ENCODE measurements at regions of chr1 and their contacts with region 1.

Region 1: GRCh38 chr1:228165372-228166169 is at the start of gene IBA57:
- DNase-seq: peak; percentile 100
- ATAC-seq: peak; percentile 96
- H3K4me3 ChIP-seq: peak within 1 kb of the TSS; percentile 40 to 76
- H3K27ac ChIP-seq: peak within 1 kb of the TSS; percentile 63 to 98
- H3K4me1 ChIP-seq: no peaks in the 10 kb centered on the region
- H3K27me3 ChIP-seq: no peaks in the 10 kb centered on the region
- total RNA-seq, gene IBA57: 7.8 to 11.1 TPM

Region 2: GRCh38 chr1:227787513-227788270 is 377.9 kb before region 1 on chr1:
- intact Hi-C with region 1: loop called in 1 of 2 experiments (anchors 10 kb)
- DNase-seq: peak; percentile 94 to 96
- ATAC-seq: peak; percentile 95
- H3K4me3 ChIP-seq: peak overlapping the region; percentile 37 to 78
- H3K27ac ChIP-seq: peak overlapping the region in 1 of 2 donors; percentile 55
- H3K4me1 ChIP-seq: no peaks in the 10 kb centered on the region
- H3K27me3 ChIP-seq: no peaks in the 10 kb centered on the region

Region 3: GRCh38 chr1:228109073-228109961 is 56.3 kb before region 1 on chr1 and contains the start of gene MRPL55:
- intact Hi-C with region 1: loop called in 1 of 2 experiments (anchors 2 kb)
- DNase-seq: peak; percentile 97 to 99
- ATAC-seq: peak; percentile 99
- H3K4me3 ChIP-seq: peak within 1 kb of the TSS; percentile 36 to 69
- H3K27ac ChIP-seq: peak within 1 kb of the TSS in 1 of 2 donors; percentile 66
- H3K4me1 ChIP-seq: no peaks in the 10 kb centered on the region
- H3K27me3 ChIP-seq: no peaks in the 10 kb centered on the region
- total RNA-seq, gene MRPL55: 27.4 to 35.4 TPM

Region 4: DNA sequence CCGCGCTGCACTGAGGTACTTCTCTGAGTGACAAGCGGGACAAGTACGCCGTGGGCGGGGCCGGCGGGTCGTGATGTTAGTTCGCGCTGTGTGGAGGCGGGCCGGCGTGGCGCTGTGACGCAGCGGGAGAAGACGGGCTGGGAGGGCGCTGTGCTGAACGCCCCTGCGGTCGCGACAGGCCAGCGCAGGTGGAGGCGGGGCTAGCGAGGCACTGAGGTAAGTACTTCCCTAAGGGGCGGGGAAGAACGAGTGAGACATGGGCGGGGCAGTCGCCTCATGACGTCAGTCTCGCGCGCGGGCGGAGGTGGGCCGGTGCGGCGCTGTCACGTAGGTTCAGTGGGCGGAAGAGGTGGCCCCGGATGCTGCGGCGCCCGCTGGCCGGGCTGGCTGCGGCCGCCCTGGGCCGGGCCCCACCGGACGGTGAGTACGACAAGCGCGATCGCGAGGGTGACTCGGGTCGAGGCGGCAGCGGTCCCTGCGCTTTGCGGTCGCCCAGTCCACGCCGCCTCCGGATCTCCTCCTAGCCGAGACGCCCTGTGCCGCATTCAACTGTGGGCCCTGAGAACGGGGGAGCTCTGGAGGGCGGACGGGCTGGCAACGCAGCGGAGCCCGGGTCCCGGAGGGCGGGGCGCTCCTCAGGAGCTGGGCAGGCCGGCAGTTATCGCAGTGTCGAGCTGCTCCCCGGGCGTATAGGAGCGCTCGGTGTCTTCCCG is 25.5 kb before region 1 on chr1 and contains the start of gene GUK1:
- intact Hi-C with region 1: loop called in 1 of 2 experiments (anchors 1 kb)
- DNase-seq: peak; percentile 100
- ATAC-seq: peak; percentile 97
- H3K4me3 ChIP-seq: peak within 1 kb of the TSS; percentile 50 to 91
- H3K27ac ChIP-seq: peak within 1 kb of the TSS; percentile 80 to 90
- H3K4me1 ChIP-seq: peaks cover 0 to 7% of the 10 kb centered on the region in 2 donors
- H3K27me3 ChIP-seq: no peaks in the 10 kb centered on the region
- total RNA-seq, gene GUK1: 247 to 248 TPM

Region 5: GRCh38 chr1:228275739-228276421 is 110.3 kb after region 1 on chr1:
- intact Hi-C with region 1: loop called in 1 of 2 experiments (anchors 5 kb)
- DNase-seq: peak; percentile 93 to 95
- ATAC-seq: peak; percentile 89
- H3K4me3 ChIP-seq: peak overlapping the region; percentile 45 to 68
- H3K27ac ChIP-seq: no peak overlapping the region
- H3K4me1 ChIP-seq: no peaks in the 10 kb centered on the region
- H3K27me3 ChIP-seq: no peaks in the 10 kb centered on the region

Measured in aorta (tissue), 5 donors.